ENCODE measurements at regions of chr7 and their contacts with region 1.

Region 1: GRCh38 chr7:148856891-148857290 is 27.2 kb downstream of the EZH2 start:
- DNase-seq: no peak
- ATAC-seq: peak; percentile 76
- H3K4me3 ChIP-seq: no peak overlapping the region
- H3K27ac ChIP-seq: no peak overlapping the region
- H3K4me1 ChIP-seq: peaks cover 14% of the 10 kb centered on the region
- H3K27me3 ChIP-seq: no peaks in the 10 kb centered on the region
- CTCF ChIP-seq: no peak
- EP300 ChIP-seq: no peak
- POLR2A ChIP-seq: no peak
- RAD21 ChIP-seq: no peak

Region 2: DNA sequence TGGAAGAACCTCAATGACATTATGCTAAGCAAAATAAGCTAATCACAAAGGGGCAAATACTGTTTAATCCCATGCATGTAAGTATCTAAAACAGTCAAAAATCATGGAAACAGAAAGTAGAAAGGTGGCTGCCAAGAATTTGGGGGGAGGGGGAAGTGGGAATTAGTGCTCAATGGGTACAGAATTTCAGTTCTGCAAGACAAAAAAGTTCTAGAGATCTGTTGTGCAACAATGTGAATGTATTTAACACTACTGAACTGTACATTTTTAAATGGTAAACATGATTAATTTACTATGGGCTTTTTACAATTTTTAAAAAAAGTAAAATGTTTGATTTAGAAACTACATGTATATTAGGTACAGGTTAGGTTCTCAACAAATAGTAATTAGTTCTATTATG is 15.3 kb after region 1 on chr7:
- CTCF ChIA-PET with region 1: interaction called, 12 read pairs
- POLR2A ChIA-PET with region 1: no interaction called
- RAD21 ChIA-PET with region 1: interaction called, 3 read pairs
- SMC1A ChIA-PET with region 1: interaction called, 7 read pairs
- in situ Hi-C with region 1: no loop called
- intact Hi-C with region 1: no loop called
- DNase-seq: no peak
- ATAC-seq: no peak
- H3K4me3 ChIP-seq: no peak overlapping the region
- H3K27ac ChIP-seq: no peak overlapping the region
- H3K4me1 ChIP-seq: peaks cover 28% of the 10 kb centered on the region
- H3K27me3 ChIP-seq: no peaks in the 10 kb centered on the region
- CTCF ChIP-seq: no peak
- EP300 ChIP-seq: no peak
- POLR2A ChIP-seq: no peak
- RAD21 ChIP-seq: no peak

Region 3: DNA sequence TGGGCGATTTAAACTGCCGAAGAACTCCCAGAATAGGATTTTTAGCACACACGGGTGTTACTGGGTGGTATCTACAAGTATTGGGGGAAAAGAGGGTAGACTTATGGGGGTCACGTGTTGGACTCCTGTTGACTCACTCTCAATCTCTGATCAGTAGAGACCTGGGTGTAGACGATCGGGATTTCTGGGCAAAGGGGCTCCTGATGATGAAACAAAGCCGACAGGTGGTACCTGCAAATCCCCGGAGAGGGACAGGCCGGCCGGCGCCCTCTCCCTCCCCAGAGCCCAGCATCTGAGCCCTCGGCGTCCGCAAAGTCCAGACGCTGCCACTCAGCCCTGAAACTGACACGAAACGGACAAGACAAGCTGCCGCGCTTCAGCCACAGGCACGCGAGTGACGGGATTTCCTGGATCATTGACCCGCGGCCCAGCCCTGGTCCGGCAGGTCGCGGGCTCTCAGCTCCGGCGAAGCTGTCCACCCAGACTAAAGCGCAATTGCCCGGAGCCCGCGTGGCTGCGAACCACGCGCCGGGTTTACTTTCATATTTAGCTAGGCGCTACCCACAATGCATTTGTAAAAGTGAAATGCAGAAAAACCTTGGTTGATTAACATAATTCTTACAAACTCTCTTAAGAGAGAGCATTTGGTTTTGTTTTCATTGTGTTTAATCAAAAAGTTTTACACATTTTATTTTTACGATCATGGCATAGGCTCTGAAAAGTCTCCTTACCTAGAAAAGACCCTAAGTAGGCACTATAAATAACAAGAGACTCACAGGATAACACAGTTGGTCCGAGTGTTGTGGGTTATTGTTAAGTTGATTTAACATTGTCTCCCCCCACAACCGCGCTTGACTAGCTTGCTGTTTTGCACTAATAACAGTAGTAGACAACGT is 84.1 kb after region 1 on chr7:
- CTCF ChIA-PET with region 1: interaction called, 7 read pairs
- POLR2A ChIA-PET with region 1: no interaction called
- RAD21 ChIA-PET with region 1: interaction called, 8 read pairs
- SMC1A ChIA-PET with region 1: interaction called, 3 read pairs
- in situ Hi-C with region 1: no loop called
- intact Hi-C with region 1: loop called (anchors 2 kb)
- DNase-seq: peak; percentile 49
- ATAC-seq: peak; percentile 90
- H3K4me3 ChIP-seq: peak overlapping the region; percentile 89
- H3K27ac ChIP-seq: peak overlapping the region; percentile 71
- H3K4me1 ChIP-seq: peaks cover 6% of the 10 kb centered on the region; the same call in 1 of the 2 replicates
- H3K27me3 ChIP-seq: no peaks in the 10 kb centered on the region
- CTCF ChIP-seq: no peak
- EP300 ChIP-seq: no peak
- POLR2A ChIP-seq: peak; percentile 83
- RAD21 ChIP-seq: 0 out of 2 replicates have a peak, but pooled peaks have one; percentile 2

Region 4: GRCh38 chr7:149598721-149599306 is 741.9 kb after region 1 on chr7:
- CTCF ChIA-PET with region 1: no interaction called
- POLR2A ChIA-PET with region 1: no interaction called
- RAD21 ChIA-PET with region 1: no interaction called
- SMC1A ChIA-PET with region 1: no interaction called
- in situ Hi-C with region 1: no loop called
- intact Hi-C with region 1: no loop called
- DNase-seq: no peak
- ATAC-seq: peak; percentile 62
- H3K4me3 ChIP-seq: peak overlapping the region; percentile 60; the same call in 1 of the 2 replicates
- H3K27ac ChIP-seq: peak overlapping the region; percentile 93
- H3K4me1 ChIP-seq: peaks cover 21% of the 10 kb centered on the region
- H3K27me3 ChIP-seq: no peaks in the 10 kb centered on the region
- CTCF ChIP-seq: peak; percentile 49 to 64 (median 56)
- EP300 ChIP-seq: no peak
- POLR2A ChIP-seq: no peak
- RAD21 ChIP-seq: peak; percentile 85

Measured in GM12878 (cell line).